ENCODE measurements at regions of chr10 and their contacts with region 1.

Region 1: GRCh38 chr10:113704637-113705343 is 25.1 kb downstream of the CASP7 start:
- DNase-seq: no peak
- H3K4me3 ChIP-seq: no peak overlapping the region
- H3K27ac ChIP-seq: no peak overlapping the region
- H3K4me1 ChIP-seq: peaks cover 4 to 43% (median 33%) of the 10 kb centered on the region in 4 donors
- H3K27me3 ChIP-seq: no peaks in the 10 kb centered on the region
- CTCF ChIP-seq: peak; percentile 57 to 72 (median 64)
- EP300 ChIP-seq: no peak
- POLR2A ChIP-seq: no peak

Region 2: DNA sequence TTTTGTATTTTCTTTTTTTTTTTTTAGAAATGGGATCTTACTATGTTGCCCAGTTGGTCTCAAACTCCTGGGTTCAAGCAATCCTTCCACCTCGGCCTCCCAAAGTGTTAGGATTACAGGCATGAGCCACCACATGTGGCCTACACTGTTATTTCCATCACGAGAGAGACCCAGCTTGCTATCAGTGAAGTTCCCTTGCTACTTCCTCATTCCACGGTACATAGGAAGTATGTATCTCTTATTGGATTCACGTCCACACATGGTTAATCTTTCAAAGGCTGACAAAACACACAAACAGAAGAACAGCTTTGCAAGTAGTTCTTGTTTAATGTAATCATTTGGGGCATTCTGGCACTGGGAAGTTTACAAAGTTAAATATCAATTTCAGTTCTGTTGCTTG is 98.2 kb after region 1 on chr10:
- intact Hi-C with region 1: loop called (anchors 2 kb)
- DNase-seq: no peak
- H3K4me3 ChIP-seq: no peak overlapping the region
- H3K27ac ChIP-seq: peak overlapping the region in 3 of 4 donors; percentile 20 to 38 (median 25)
- H3K4me1 ChIP-seq: peaks cover 0 to 31% (median 25%) of the 10 kb centered on the region in 4 donors
- H3K27me3 ChIP-seq: no peaks in the 10 kb centered on the region
- CTCF ChIP-seq: no peak
- EP300 ChIP-seq: no peak
- POLR2A ChIP-seq: no peak

Measured in esophagus muscularis mucosa (tissue), 4 donors.